ENCODE measurements at regions of chr10 and their contacts with region 1.

Region 1: GRCh38 chr10:67779465-67780203 is 58.4 kb downstream of the DNAJC12 start:
- DNase-seq: no peak

Region 2: GRCh38 chr10:67539312-67539711 is 240.3 kb before region 1 on chr10:
- intact Hi-C with region 1: loop called (anchors 10 kb)
- DNase-seq: no peak

Region 3: GRCh38 chr10:67666416-67667034 is 113.1 kb before region 1 on chr10:
- intact Hi-C with region 1: loop called (anchors 2 kb)
- DNase-seq: no peak

Region 4: GRCh38 chr10:67697724-67698131 is 81.9 kb before region 1 on chr10:
- intact Hi-C with region 1: loop called (anchors 2 kb)
- DNase-seq: no peak